AG04449 (cell line): ENCODE measurements at regions of chr2 and their contacts with region 1.

Region 1: DNA sequence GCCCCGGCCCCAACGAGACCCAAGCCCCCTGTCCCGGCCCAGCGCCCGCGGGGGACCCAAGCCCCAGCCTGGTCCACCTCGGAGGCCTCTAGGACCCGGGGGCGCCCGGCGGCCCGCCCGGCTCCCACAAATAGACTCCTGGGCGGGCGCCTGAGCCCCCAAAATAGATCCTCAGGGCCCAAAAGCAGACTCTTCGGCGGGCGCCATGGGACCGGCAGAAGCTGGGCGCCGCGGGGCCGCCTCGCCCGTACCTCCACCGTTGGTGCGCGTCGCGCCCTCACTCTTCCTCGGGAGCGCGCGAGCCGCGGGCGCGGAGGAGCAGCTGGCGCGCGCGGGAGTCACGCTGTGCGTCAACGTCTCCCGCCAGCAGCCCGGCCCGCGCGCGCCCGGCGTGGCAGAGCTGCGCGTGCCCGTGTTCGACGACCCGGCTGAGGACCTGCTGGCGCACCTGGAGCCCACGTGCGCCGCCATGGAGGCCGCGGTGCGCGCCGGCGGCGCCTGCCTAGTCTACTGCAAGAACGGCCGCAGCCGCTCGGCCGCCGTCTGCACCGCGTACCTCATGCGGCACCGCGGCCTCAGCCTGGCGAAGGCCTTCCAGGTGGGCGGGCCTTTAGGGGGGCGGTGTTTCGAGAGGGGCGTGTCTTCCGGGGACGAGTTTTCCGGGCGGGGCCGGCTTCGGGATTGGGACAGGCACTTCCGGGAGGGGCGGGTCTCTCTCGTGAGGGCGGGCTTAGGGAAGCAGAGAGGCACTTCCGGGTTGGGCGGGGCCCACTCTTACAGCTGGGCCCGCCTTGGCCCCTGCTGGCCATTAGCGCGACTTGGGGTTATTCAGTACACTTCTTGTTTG is 546 bp downstream of the DUSP28 start:
- DNase-seq: peak; percentile 84
- H3K4me3 ChIP-seq: peak overlapping the region; percentile 69
- CTCF ChIP-seq: peak; percentile 33

Region 2: GRCh38 chr2:240538031-240538780 is 22.5 kb before region 1 on chr2:
- CTCF ChIA-PET with region 1: no interaction called
- POLR2A ChIA-PET with region 1: no interaction called
- DNase-seq: no peak
- H3K4me3 ChIP-seq: no peak overlapping the region
- CTCF ChIP-seq: no peak

Region 3: DNA sequence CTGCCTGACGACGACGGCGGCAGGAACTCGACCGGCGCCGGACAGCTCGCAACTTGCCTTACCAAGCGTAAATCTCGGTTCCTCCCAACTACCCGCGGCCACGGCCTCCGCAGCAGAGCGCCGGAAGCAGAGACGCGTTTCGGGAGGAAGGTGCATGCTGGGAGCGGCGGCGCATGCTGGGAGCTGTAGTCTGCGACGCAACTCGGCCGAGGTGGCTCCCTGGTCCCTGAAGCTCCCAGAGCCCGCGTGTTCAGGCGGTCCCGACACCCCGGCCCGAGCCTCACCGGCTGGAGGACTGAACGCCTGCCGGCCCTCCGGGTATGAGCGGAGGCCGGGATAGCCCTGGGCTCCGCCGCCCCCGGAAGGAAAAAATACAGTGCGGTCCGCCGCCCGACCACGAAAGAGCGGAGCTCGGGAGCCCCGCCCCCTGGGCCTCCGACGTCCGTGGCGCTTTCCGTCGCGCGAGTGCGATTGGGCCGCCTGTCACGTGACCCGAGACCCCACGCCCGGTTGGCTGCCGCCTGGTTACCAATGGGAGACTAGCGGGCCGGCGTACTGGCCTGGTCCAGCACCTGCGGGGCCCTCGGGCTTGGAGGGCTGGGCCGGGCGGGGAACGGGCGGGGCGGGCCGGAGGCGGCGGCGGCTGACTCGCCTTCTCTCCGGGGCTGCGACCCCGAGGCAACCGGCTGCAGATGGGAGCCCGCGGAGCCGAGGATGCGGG is 25.7 kb after region 1 on chr2 and contains the start of gene CAPN10:
- CTCF ChIA-PET with region 1: interaction called, 75 read pairs
- POLR2A ChIA-PET with region 1: interaction called, 10 read pairs
- DNase-seq: peak; percentile 47
- H3K4me3 ChIP-seq: peak within 1 kb of the TSS; percentile 72
- CTCF ChIP-seq: no peak